ENCODE measurements at regions of chr9 and their contacts with region 1.

Region 1: DNA sequence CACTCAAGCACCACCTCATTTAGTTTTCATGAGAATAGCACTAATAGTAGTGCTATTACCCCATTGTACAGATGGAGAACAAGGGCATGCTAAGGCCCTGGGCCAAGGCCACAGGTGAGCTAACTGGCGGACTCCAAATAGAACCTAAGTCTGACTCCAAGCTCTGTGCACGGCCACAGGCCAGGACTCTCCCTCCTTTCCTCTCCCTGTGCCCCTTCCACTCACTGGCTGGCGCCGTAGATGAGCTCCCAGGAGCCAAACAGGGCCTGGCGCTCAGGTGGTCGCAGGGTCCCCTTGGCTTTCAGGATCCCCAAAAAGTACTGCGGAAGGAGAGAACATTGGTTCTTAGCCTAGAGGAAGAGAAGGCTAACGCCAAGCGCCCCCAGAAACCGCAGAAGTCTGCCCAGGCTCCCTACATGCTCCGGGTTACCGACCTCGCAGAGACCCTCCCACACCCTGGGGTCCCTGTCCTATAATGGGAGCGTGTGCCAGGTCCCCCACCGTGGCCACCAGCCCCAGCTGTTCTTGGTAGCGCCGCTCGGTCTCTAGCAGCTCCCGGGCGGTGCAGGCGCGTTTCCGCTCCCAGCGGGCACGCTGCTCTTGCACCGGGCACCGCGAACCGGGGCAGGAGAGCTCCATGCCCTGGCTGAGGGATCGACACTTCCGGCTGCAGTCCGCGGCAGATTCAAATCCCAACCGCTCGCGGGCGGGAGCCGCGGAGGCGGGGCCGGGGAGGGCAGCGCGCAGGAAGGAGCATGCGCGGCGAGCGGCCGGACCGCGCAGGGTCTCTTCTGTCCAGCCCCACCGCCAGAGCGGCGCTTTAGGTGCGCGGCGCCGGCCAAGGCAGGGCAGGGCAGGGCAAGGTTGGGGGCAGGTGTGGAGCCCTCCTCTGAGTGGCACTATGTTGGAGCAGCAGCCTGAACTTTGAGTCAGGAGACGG is at the start of gene ARHGEF39:
- DNase-seq: peak; percentile 76 to 84
- ATAC-seq: peak; percentile 79 to 88 (median 85)
- H3K4me3 ChIP-seq: peak within 1 kb of the TSS in 9 of 10 donors; percentile 36 to 67 (median 58)
- H3K27ac ChIP-seq: peak within 1 kb of the TSS in 9 of 10 donors; percentile 31 to 78 (median 61)
- H3K4me1 ChIP-seq: peaks cover 0 to 50% (median 34%) of the 10 kb centered on the region in 9 donors
- H3K27me3 ChIP-seq: no peaks in the 10 kb centered on the region
- CTCF ChIP-seq: peak in 4 of 9 donors; percentile 12 to 44 (median 39)
- total RNA-seq, gene ARHGEF39: 0.09 to 0.85 (median 0.30) TPM in 8 of 10 donors, not detected in the others

Region 2: DNA sequence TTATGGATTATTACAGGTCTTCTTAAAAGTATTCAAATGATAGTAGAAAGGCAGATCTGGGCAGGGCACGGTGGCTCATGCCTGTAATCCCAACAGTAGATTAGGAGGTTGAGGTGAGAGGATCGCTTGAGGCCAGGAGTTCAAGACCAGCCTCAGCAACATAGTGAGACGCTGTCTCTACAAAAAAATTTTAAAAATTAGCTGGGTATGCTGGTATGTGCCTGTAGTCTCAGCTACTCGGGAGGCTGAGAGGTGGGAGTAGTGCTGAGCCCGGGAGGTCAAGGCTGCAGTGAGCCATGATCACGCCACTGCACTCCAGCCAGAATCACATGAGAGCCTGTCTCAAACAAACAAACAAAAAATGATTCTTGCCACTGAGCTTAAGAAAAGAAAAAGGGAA is 1442.3 kb before region 1 on chr9:
- intact Hi-C with region 1: no loop called
- DNase-seq: no peak
- ATAC-seq: no peak
- H3K4me3 ChIP-seq: no peak overlapping the region
- H3K27ac ChIP-seq: peak overlapping the region in 3 of 10 donors; percentile 15 to 46 (median 38)
- H3K4me1 ChIP-seq: peaks cover 0 to 31% (median 8%) of the 10 kb centered on the region in 9 donors
- H3K27me3 ChIP-seq: no peaks in the 10 kb centered on the region
- CTCF ChIP-seq: no peak

Region 3: DNA sequence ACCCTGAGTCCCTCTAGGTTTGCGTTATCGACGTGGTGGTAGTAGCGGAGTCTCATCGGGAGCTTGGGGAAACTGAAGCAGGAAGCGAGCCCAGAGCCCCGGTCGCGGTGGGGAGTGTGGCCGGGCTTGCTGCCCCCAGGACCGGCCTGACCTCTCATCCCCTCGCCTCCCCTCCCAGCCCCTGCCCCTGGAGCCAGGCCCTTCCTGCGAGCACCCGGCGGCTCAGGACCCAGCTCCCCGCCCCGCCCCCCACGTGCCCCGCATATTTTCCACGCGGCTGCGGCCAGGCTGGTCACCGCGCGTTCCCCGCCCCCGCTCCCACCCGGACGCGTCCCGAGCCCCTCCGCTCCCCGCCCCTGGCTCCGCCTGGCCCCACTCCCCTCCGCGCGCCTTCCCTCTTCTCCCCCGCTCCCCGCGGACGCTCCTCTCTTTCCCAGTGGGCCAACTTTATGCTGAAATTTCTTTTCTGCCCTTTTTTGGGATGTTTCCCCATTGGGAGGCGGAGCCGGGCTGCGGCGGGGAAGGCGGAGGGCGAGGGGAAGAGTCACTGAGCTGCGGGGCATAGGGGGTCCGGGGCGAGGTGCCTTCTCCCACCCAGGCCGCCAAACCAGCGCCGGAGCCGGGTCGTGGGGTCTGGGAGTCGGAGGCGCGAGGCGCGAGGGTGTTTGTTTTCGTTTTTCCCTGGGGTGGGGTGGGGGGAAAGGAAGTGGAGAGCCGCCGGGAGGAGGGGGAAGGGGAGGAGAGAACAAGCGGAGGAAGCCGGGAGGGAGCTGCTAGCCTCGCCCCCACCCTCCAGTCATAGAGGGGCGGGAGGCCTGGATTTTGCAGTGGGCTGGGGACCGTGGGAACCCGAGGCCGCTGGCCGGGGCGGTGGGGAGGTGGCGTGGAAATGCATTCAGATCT is 25.9 kb after region 1 on chr9:
- intact Hi-C with region 1: loop called in 3 of 10 experiments (anchors 2 to 5 kb)
- DNase-seq: peak; percentile 84 to 90
- ATAC-seq: peak; percentile 59 to 75 (median 66)
- H3K4me3 ChIP-seq: peak overlapping the region; percentile 33 to 86 (median 71)
- H3K27ac ChIP-seq: peak overlapping the region; percentile 72 to 100 (median 94)
- H3K4me1 ChIP-seq: peaks cover under 1 to 48% (median 45%) of the 10 kb centered on the region in 9 donors
- H3K27me3 ChIP-seq: peaks cover 0 to 8% (median 0%) of the 10 kb centered on the region in 7 donors
- CTCF ChIP-seq: no peak

Region 4: DNA sequence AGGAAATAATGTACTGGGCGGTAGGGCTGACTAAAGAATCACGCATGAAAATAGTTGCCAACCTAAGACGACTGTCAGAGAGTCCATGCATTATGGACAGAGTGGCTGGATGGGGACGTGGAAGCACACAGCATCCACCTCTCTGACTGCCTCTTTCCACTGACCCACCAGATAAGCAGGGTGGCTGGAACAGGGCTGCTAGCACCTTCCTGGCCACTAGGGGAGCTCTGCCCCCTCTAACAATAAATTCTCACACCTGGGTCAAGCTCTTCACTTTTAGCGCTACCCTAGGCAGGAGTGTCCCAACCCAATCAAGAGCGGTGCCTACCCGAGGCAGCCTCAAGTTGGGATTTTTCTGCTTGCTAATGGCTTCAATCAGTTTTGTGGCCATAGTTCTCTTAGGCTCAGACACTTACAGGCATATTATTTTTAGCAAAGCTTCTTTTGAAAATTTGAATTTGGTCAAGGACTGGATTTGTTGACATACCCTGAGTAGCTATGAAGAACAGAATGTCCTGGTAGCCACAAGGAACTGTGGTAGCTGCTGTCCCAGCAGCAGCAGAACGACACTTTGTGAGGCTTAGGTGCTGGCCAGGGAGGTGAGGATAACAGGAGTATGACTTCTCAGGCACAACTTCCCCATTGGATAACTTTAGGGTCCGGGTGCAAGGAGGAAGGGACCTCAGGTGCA is 31.9 kb after region 1 on chr9:
- intact Hi-C with region 1: loop called in 2 of 10 experiments (anchors 5 kb)
- DNase-seq: peak; percentile 46 to 47
- ATAC-seq: peak; percentile 56 to 76 (median 69)
- H3K4me3 ChIP-seq: no peak overlapping the region
- H3K27ac ChIP-seq: peak overlapping the region in 2 of 10 donors; percentile 0 to 4
- H3K4me1 ChIP-seq: peaks cover 0 to 16% (median 6%) of the 10 kb centered on the region in 9 donors
- H3K27me3 ChIP-seq: no peaks in the 10 kb centered on the region
- CTCF ChIP-seq: peak; percentile 70 to 94 (median 91)